Activated naive CD8-positive, alpha-beta T cell treated with anti-CD3 and anti-CD28 coated beads, Interleukin-2, amount 10 ng/mL, durations not matched to agents 7 days and 5 days (primary cell): ENCODE measurements at regions of chr1 and their contacts with region 1.

Region 1: GRCh38 chr1:6359216-6360116 is 34.1 kb downstream of the ACOT7 start:
- DNase-seq: peak; percentile 73
- ATAC-seq: peak; percentile 79
- H3K4me3 Mint-ChIP-seq: peak overlapping the region; percentile 85
- H3K27ac Mint-ChIP-seq: peak overlapping the region; percentile 98
- H3K4me1 Mint-ChIP-seq: peaks cover 41% of the 10 kb centered on the region
- H3K27me3 Mint-ChIP-seq: no peaks in the 10 kb centered on the region

Region 2: DNA sequence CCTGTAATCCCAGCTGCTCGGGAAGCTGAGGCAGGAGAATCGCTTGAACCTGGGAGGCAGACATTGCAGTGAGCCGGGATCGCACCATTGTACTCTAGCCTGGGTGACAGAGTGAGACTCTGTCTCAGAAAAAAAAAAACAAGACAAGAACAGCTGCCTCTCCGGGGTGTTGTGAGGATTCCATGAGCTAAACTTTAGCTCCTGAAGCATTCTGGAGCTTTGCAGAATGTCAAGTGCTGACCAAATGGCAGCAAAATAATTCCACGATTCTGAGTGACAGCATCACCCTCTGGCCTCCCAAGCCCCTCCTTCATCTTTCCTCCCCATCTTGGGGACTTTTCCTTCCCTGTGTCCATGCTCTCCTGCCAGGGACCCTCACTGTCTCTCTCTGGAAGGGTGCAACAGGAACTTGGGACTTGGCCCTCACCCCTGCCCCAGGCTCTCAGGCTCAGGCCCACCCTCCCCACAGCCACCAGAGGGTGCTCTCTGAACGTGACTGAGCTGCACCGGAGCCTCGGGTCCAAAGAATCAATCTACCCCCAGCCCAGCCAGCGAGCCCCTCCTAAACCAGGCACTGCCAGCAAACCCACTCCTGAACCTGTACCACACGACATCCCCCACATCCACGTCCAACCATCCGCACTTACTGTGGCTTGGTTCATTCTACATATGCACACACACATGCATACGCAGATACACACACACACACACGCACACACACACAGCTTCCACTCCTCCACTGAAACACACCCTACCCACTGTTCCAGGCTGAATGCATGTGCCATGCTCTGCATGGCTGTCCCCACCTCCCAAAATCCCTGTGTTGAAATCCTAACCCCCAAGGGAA is 11.6 kb before region 1 on chr1:
- POLR2A ChIA-PET with region 1: interaction called, 42 read pairs
- DNase-seq: peak; percentile 79
- ATAC-seq: peak; percentile 57
- H3K4me3 Mint-ChIP-seq: peak overlapping the region; percentile 58
- H3K27ac Mint-ChIP-seq: peak overlapping the region; percentile 96
- H3K4me1 Mint-ChIP-seq: peaks cover 24% of the 10 kb centered on the region
- H3K27me3 Mint-ChIP-seq: no peaks in the 10 kb centered on the region

Region 3: GRCh38 chr1:6393400-6394187 is 34.1 kb after region 1 on chr1 and contains the start of gene ACOT7:
- POLR2A ChIA-PET with region 1: interaction called, 60 read pairs
- DNase-seq: peak; percentile 94
- ATAC-seq: peak; percentile 87
- H3K4me3 Mint-ChIP-seq: peak within 1 kb of the TSS; percentile 89
- H3K27ac Mint-ChIP-seq: peak within 1 kb of the TSS; percentile 96
- H3K4me1 Mint-ChIP-seq: peaks cover 23% of the 10 kb centered on the region
- H3K27me3 Mint-ChIP-seq: no peaks in the 10 kb centered on the region
- total RNA-seq, gene ACOT7: 43.9 to 52.8 TPM

Region 4: DNA sequence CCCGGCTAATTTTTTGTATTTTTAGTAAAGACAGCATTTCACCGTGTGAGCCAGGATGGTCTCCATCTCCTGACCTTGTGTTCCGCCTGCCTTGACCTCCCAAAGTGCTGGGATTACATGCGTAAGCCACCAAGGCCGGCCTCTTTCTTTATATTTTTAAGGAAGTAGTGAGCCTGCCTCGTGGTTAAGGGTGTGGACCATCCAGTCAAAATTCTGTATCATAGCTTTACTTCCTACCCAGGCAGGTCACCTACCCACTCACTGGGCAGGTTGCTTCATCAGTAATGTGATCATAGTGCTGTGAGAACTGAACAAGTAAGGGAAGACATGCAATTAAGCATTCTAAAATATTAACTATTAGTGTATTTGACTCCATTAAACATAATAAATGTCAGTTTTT is 42.2 kb after region 1 on chr1:
- POLR2A ChIA-PET with region 1: interaction called, 10 read pairs
- DNase-seq: no peak
- ATAC-seq: no peak
- H3K4me3 Mint-ChIP-seq: no peak overlapping the region
- H3K27ac Mint-ChIP-seq: no peak overlapping the region
- H3K4me1 Mint-ChIP-seq: peaks cover 6% of the 10 kb centered on the region
- H3K27me3 Mint-ChIP-seq: peaks cover 5% of the 10 kb centered on the region